Right cardiac atrium (tissue), 5 donors: ENCODE measurements at regions of chr17 and their contacts with region 1.

Region 1: GRCh38 chr17:7136266-7136877 is 21.8 kb upstream of the ASGR2 start:
- DNase-seq: peak; percentile 76 to 93 (median 88)
- ATAC-seq: no peak
- H3K4me3 ChIP-seq: no peak overlapping the region
- H3K27ac ChIP-seq: no peak overlapping the region
- H3K4me1 ChIP-seq: no peaks in the 10 kb centered on the region
- H3K27me3 ChIP-seq: no peaks in the 10 kb centered on the region

Region 2: GRCh38 chr17:6913608-6914443 is 222.5 kb before region 1 on chr17:
- intact Hi-C with region 1: loop called in 2 of 4 experiments (anchors 5 to 10 kb)
- DNase-seq: peak; percentile 78 to 92 (median 88)
- ATAC-seq: peak; percentile 77 to 87
- H3K4me3 ChIP-seq: peak overlapping the region; percentile 48
- H3K27ac ChIP-seq: no peak overlapping the region
- H3K4me1 ChIP-seq: peaks cover 3% of the 10 kb centered on the region
- H3K27me3 ChIP-seq: no peaks in the 10 kb centered on the region

Region 3: DNA sequence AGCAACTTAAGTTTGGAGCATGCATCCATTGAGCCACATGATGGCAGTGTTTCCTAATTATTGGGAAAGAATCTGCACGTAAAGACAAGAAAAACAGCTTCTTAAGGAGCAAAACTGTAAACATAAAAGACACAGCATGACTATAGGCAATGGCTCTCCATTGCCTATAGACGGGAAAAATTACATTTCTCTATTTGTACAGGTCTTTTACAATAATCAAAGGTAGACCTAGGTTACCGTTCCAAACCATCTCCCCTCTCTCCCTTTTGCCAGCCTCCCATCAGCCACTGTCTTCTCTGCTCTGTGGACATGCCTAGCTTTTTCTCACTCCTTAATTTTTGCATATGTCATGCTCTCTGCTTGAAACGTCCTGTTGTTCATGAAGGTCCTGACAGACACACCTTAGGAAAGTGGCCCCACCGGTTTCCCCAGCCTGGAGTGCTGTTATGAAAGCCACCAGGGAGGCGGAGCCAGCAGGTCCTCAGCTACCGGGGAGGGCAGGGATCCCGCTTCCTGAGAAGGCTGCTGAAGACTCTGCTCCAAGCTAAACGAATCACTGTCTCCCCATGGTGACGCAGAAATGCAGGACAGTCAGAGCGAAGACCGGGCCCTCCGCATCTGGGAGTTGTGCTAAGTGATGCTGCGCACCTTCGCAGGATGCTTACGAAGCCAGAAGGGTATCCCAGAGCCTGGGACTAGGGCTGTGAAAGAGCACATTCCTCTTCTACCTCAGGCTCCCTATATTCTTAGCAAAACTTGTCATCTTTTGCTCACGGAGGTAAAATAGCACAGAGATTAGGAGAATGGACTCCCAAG is 90.3 kb before region 1 on chr17:
- intact Hi-C with region 1: loop called in 3 of 4 experiments (anchors 2 to 5 kb)
- DNase-seq: peak in 1 of 3 donors; percentile 66
- ATAC-seq: no peak
- H3K4me3 ChIP-seq: peak overlapping the region; percentile 4
- H3K27ac ChIP-seq: no peak overlapping the region
- H3K4me1 ChIP-seq: peaks cover 5% of the 10 kb centered on the region
- H3K27me3 ChIP-seq: no peaks in the 10 kb centered on the region

Region 4: GRCh38 chr17:7056386-7056785 is 80.0 kb before region 1 on chr17:
- intact Hi-C with region 1: loop called (anchors 2 to 5 kb)
- DNase-seq: no peak
- ATAC-seq: no peak
- H3K4me3 ChIP-seq: no peak overlapping the region
- H3K27ac ChIP-seq: no peak overlapping the region
- H3K4me1 ChIP-seq: no peaks in the 10 kb centered on the region
- H3K27me3 ChIP-seq: no peaks in the 10 kb centered on the region